ENCODE measurements at regions of chr7 and their contacts with region 1.

Region 1: DNA sequence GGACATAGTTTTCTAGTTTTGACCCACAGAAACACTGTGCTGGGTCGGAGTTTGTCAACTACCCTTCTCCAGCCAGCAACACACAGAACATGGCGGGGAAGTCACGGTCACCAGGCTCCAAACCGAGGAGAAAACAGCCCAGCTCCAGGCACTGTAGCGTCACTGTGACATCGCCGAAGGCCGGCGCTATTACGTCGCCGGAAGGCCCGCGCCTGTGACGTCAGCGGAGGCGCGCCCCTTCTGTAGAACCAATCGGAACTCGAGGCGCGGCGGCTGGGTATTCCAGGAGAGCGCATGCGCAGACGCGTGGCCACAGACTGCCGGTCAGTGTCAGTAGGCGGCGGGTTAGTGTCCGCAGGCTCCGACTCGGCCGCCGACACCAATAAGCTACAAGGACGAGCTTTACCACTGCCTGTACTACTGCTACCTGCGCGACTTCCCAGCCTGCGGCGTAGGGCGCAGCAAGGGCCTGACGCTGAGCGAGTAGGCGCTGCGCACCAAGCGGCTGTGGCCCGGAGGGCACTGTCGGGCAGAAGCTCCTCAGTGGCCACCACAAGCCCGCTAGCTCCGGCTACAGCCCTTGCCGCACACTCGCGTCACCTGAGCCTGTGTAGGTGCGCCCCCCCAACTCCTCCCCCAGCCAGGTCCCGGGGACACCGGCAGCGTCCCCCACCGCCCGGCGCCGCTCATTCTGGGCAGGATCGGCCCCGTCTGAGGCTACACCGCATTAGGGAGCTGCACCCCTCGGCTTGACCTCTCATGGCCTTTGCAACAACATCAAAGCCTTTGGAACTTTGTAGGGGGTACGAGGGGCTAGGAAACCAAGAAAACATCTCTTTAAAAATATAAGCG is 35.1 kb upstream of the SRRM3 start:
- DNase-seq: peak; percentile 90 to 95 (median 94)
- ATAC-seq: peak; percentile 96
- H3K4me3 ChIP-seq: peak overlapping the region; percentile 96
- H3K4me3 Mint-ChIP-seq: peak overlapping the region; percentile 84 to 92 (median 90)
- H3K27ac ChIP-seq: peak overlapping the region; percentile 84
- H3K27ac Mint-ChIP-seq: peak overlapping the region; percentile 79 to 99 (median 97)
- H3K4me1 ChIP-seq: peaks cover 0 to 4% of the 10 kb centered on the region in 2 donors
- H3K4me1 Mint-ChIP-seq: peaks cover 0 to 14% (median 6%) of the 10 kb centered on the region in 7 donors
- H3K27me3 ChIP-seq: no peaks in the 10 kb centered on the region
- H3K27me3 Mint-ChIP-seq: no peaks in the 10 kb centered on the region

Region 2: DNA sequence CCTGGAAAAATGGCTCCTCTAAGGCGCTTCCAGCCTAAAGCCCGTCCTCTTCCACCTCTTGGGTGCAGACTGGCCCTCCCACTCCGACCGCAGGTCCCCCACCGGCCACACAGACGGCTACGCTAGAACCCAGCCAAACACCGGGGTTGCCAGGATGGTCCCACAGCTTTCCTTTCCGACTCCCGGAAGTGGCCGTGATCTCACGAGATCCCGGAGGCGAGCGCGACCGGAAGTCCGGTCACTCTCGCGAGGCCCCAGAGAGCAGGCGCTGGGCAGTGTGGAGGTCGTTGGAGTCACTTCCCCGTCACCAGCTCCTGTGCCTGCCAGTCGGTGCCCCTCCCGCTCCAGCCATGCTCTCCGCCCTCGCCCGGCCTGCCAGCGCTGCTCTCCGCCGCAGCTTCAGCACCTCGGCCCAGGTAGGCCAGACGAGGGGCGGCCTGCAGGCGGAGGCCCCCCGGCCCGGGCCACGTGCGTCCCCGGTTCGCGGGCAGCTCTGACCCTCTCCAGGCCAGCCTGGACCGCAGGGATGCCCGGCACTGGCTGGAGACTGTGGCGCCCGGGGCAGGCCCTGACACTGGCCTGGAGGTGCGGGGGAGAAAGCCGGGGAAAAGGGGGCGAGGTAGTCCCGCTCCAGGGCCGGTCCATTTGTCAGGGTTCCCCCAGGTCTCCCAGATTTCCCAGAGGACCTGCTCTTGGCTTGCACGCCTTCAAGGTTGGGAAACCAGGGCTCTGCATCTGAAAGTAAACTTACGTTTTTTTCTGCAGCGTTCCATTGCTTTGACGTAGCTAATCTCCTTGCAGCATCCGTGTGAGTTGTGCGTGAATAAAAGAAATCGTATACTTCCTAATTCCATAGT is 118.6 kb before region 1 on chr7 and contains the starts of genes MDH2 and STYXL1:
- CTCF ChIA-PET with region 1: no interaction called
- POLR2A ChIA-PET with region 1: interaction called, 8 read pairs
- intact Hi-C with region 1: loop called (anchors 1 to 2 kb)
- DNase-seq: peak; percentile 68 to 89 (median 76)
- ATAC-seq: peak; percentile 92
- H3K4me3 ChIP-seq: peak within 1 kb of the TSS; percentile 95
- H3K4me3 Mint-ChIP-seq: peak within 1 kb of the TSS; percentile 90 to 99 (median 97)
- H3K27ac ChIP-seq: peak within 1 kb of the TSS; percentile 80
- H3K27ac Mint-ChIP-seq: peak within 1 kb of the TSS; percentile 92 to 98 (median 97)
- H3K4me1 ChIP-seq: peaks cover 7 to 17% of the 10 kb centered on the region in 2 donors
- H3K4me1 Mint-ChIP-seq: peaks cover 36 to 70% (median 53%) of the 10 kb centered on the region in 7 donors
- H3K27me3 ChIP-seq: no peaks in the 10 kb centered on the region
- H3K27me3 Mint-ChIP-seq: no peaks in the 10 kb centered on the region
- total RNA-seq, gene MDH2: 71.7 to 172 (median 74.6) TPM
- total RNA-seq, gene STYXL1: 11.3 to 31.7 (median 20.0) TPM

Region 3: DNA sequence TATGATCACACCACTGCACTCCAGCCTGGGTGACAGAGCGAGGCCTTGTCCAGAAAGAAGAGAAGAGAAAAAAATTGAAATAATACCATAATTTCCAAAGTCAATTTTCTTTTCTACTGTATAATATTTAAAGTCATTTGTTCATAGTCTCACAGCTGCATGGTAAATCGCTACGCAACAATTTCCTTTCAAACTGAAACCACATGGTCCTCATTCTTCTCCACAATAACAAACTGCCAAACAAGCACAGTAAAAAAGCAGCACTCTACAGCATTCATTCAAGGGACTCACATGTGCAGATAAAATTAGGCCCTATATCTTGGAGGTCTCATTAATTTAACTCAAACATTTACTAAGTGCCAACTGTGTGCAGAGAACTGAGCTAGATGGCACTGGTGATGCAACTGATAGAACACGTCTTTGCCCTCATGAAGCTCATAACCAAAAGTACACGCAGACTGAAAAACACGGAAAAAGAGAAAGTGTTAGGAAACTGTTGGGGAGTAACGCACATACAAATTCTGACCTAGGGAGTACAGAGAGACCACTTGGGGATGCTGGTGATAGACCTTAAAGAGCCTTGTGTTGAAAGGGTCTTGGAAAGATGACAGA is 33.4 kb before region 1 on chr7:
- CTCF ChIA-PET with region 1: no interaction called
- POLR2A ChIA-PET with region 1: no interaction called
- intact Hi-C with region 1: loop called (anchors 2 kb)
- DNase-seq: peak in 6 of 9 donors; percentile 11 to 50 (median 26)
- ATAC-seq: peak; percentile 69
- H3K4me3 ChIP-seq: peak overlapping the region; percentile 28
- H3K4me3 Mint-ChIP-seq: peak overlapping the region; percentile 59 to 95 (median 81)
- H3K27ac ChIP-seq: peak overlapping the region; percentile 41
- H3K27ac Mint-ChIP-seq: peak overlapping the region; percentile 88 to 99 (median 94)
- H3K4me1 ChIP-seq: peaks cover 0 to 13% of the 10 kb centered on the region in 2 donors
- H3K4me1 Mint-ChIP-seq: peaks cover 28 to 49% (median 40%) of the 10 kb centered on the region in 7 donors
- H3K27me3 ChIP-seq: no peaks in the 10 kb centered on the region
- H3K27me3 Mint-ChIP-seq: no peaks in the 10 kb centered on the region

Region 4: GRCh38 chr7:76142861-76143260 is 23.8 kb before region 1 on chr7:
- CTCF ChIA-PET with region 1: no interaction called
- POLR2A ChIA-PET with region 1: no interaction called
- intact Hi-C with region 1: loop called in 1 of 2 experiments (anchors 2 kb)
- DNase-seq: peak in 1 of 9 donors; percentile 30
- ATAC-seq: peak; percentile 95
- H3K4me3 ChIP-seq: no peak overlapping the region
- H3K4me3 Mint-ChIP-seq: peak overlapping the region in 6 of 10 donors; percentile 16 to 68 (median 56)
- H3K27ac ChIP-seq: no peak overlapping the region
- H3K27ac Mint-ChIP-seq: peak overlapping the region in 5 of 9 donors; percentile 72 to 94 (median 80)
- H3K4me1 ChIP-seq: peaks cover 0 to 11% of the 10 kb centered on the region in 2 donors
- H3K4me1 Mint-ChIP-seq: peaks cover 7 to 32% (median 24%) of the 10 kb centered on the region in 7 donors
- H3K27me3 ChIP-seq: no peaks in the 10 kb centered on the region
- H3K27me3 Mint-ChIP-seq: no peaks in the 10 kb centered on the region

Region 5: DNA sequence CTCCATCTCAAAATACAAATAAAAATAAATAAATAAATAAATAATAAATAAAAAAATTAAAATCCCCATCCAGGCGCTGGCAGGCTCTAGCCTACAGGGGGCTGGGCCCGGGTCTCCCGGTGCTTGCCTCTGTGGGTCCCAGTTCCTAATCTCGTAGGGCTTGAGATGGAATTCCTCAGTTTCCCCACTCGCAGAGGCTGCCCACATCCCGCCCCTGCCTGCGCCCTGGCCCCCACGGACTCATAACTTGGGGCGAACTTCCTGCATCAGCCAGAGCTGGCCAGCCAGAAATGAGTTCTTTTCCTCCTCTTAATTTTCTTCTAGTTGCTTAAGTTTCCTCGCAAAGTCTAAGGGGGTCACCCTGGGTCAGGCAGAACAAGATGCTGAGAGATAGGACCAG is 13.1 kb after region 1 on chr7:
- CTCF ChIA-PET with region 1: interaction called, 8 read pairs
- POLR2A ChIA-PET with region 1: interaction called, 3 read pairs
- intact Hi-C with region 1: loop called in 1 of 2 experiments (anchors 1 kb)
- DNase-seq: no peak
- ATAC-seq: no peak
- H3K4me3 ChIP-seq: no peak overlapping the region
- H3K4me3 Mint-ChIP-seq: no peak overlapping the region
- H3K27ac ChIP-seq: no peak overlapping the region
- H3K27ac Mint-ChIP-seq: no peak overlapping the region
- H3K4me1 ChIP-seq: no peaks in the 10 kb centered on the region
- H3K4me1 Mint-ChIP-seq: peaks cover 2 to 7% (median 4%) of the 10 kb centered on the region in 7 donors
- H3K27me3 ChIP-seq: no peaks in the 10 kb centered on the region
- H3K27me3 Mint-ChIP-seq: peaks cover 0 to 2% (median 0%) of the 10 kb centered on the region in 5 donors

Region 6: GRCh38 chr7:76191783-76192275 is 25.2 kb after region 1 on chr7:
- CTCF ChIA-PET with region 1: no interaction called
- POLR2A ChIA-PET with region 1: no interaction called
- intact Hi-C with region 1: no loop called
- DNase-seq: no peak
- ATAC-seq: no peak
- H3K4me3 ChIP-seq: no peak overlapping the region
- H3K4me3 Mint-ChIP-seq: no peak overlapping the region
- H3K27ac ChIP-seq: no peak overlapping the region
- H3K27ac Mint-ChIP-seq: peak overlapping the region in 1 of 9 donors; percentile 46
- H3K4me1 ChIP-seq: no peaks in the 10 kb centered on the region
- H3K4me1 Mint-ChIP-seq: no peaks in the 10 kb centered on the region
- H3K27me3 ChIP-seq: peaks cover 0 to 2% of the 10 kb centered on the region in 2 donors
- H3K27me3 Mint-ChIP-seq: peaks cover 0 to 15% (median 6%) of the 10 kb centered on the region in 5 donors

Region 7: GRCh38 chr7:76201730-76202665 is 35.4 kb after region 1 on chr7 and contains the start of gene SRRM3:
- CTCF ChIA-PET with region 1: no interaction called
- POLR2A ChIA-PET with region 1: no interaction called
- intact Hi-C with region 1: loop called in 1 of 2 experiments (anchors 1 kb)
- DNase-seq: peak; percentile 66 to 95 (median 84)
- ATAC-seq: peak; percentile 100
- H3K4me3 ChIP-seq: no peak within 1 kb of the TSS
- H3K4me3 Mint-ChIP-seq: no peak within 1 kb of the TSS
- H3K27ac ChIP-seq: no peak within 1 kb of the TSS
- H3K27ac Mint-ChIP-seq: peak within 1 kb of the TSS in 1 of 9 donors; percentile 38
- H3K4me1 ChIP-seq: no peaks in the 10 kb centered on the region
- H3K4me1 Mint-ChIP-seq: peaks cover 0 to 2% (median 0%) of the 10 kb centered on the region in 7 donors
- H3K27me3 ChIP-seq: no peaks in the 10 kb centered on the region
- H3K27me3 Mint-ChIP-seq: peaks cover 3 to 42% (median 23%) of the 10 kb centered on the region in 5 donors
- total RNA-seq, gene SRRM3: not detected